B cell (primary cell): ENCODE measurements at regions of chr15 and their contacts with region 1.

Region 1: GRCh38 chr15:78241007-78241406 is 6.6 kb upstream of the ACSBG1 start:
- DNase-seq: peak; percentile 79
- ATAC-seq: peak; percentile 92
- H3K4me3 ChIP-seq: no peak overlapping the region
- H3K4me3 Mint-ChIP-seq: no peak overlapping the region
- H3K27ac ChIP-seq: no peak overlapping the region
- H3K27ac Mint-ChIP-seq: no peak overlapping the region
- H3K4me1 ChIP-seq: no peaks in the 10 kb centered on the region
- H3K4me1 Mint-ChIP-seq: no peaks in the 10 kb centered on the region
- H3K27me3 ChIP-seq: peaks cover 0 to 7% (median 0%) of the 10 kb centered on the region in 4 experiments
- H3K27me3 Mint-ChIP-seq: peaks cover 6% of the 10 kb centered on the region
- CTCF ChIP-seq: peak; percentile 87

Region 2: GRCh38 chr15:77909182-77909940 is 331.6 kb before region 1 on chr15:
- CTCF ChIA-PET with region 1: interaction called, 16 read pairs
- POLR2A ChIA-PET with region 1: no interaction called
- intact Hi-C with region 1: no loop called
- DNase-seq: peak; percentile 4
- ATAC-seq: no peak
- H3K4me3 ChIP-seq: no peak overlapping the region
- H3K4me3 Mint-ChIP-seq: no peak overlapping the region
- H3K27ac ChIP-seq: no peak overlapping the region
- H3K27ac Mint-ChIP-seq: no peak overlapping the region
- H3K4me1 ChIP-seq: no peaks in the 10 kb centered on the region
- H3K4me1 Mint-ChIP-seq: no peaks in the 10 kb centered on the region
- H3K27me3 ChIP-seq: no peaks in the 10 kb centered on the region
- H3K27me3 Mint-ChIP-seq: peaks cover 9% of the 10 kb centered on the region
- CTCF ChIP-seq: no peak

Region 3: GRCh38 chr15:77959432-77959879 is 281.6 kb before region 1 on chr15:
- CTCF ChIA-PET with region 1: interaction called, 43 read pairs
- POLR2A ChIA-PET with region 1: no interaction called
- intact Hi-C with region 1: loop called (anchors 1 kb)
- DNase-seq: peak; percentile 77
- ATAC-seq: peak; percentile 100
- H3K4me3 ChIP-seq: peak overlapping the region in 2 of 5 experiments; percentile 23 to 36
- H3K4me3 Mint-ChIP-seq: peak overlapping the region; percentile 49
- H3K27ac ChIP-seq: no peak overlapping the region
- H3K27ac Mint-ChIP-seq: no peak overlapping the region
- H3K4me1 ChIP-seq: peaks cover 3 to 6% of the 10 kb centered on the region in 2 donors
- H3K4me1 Mint-ChIP-seq: peaks cover 7% of the 10 kb centered on the region
- H3K27me3 ChIP-seq: peaks cover 0 to 2% (median 0%) of the 10 kb centered on the region in 4 experiments
- H3K27me3 Mint-ChIP-seq: peaks cover 18% of the 10 kb centered on the region
- CTCF ChIP-seq: peak; percentile 96

Region 4: GRCh38 chr15:77966540-77967290 is 274.3 kb before region 1 on chr15:
- CTCF ChIA-PET with region 1: interaction called, 18 read pairs
- POLR2A ChIA-PET with region 1: no interaction called
- intact Hi-C with region 1: no loop called
- DNase-seq: peak; percentile 62
- ATAC-seq: peak; percentile 68
- H3K4me3 ChIP-seq: no peak overlapping the region
- H3K4me3 Mint-ChIP-seq: no peak overlapping the region
- H3K27ac ChIP-seq: no peak overlapping the region
- H3K27ac Mint-ChIP-seq: no peak overlapping the region
- H3K4me1 ChIP-seq: no peaks in the 10 kb centered on the region
- H3K4me1 Mint-ChIP-seq: peaks cover 4% of the 10 kb centered on the region
- H3K27me3 ChIP-seq: no peaks in the 10 kb centered on the region
- H3K27me3 Mint-ChIP-seq: peaks cover 6% of the 10 kb centered on the region
- CTCF ChIP-seq: peak; percentile 84

Region 5: GRCh38 chr15:78131295-78132061 is 109.5 kb before region 1 on chr15 and contains the start of gene CIB2:
- CTCF ChIA-PET with region 1: interaction called, 30 read pairs
- POLR2A ChIA-PET with region 1: interaction called, 7 read pairs
- intact Hi-C with region 1: loop called (anchors 1 kb)
- DNase-seq: peak; percentile 86
- ATAC-seq: peak; percentile 94
- H3K4me3 ChIP-seq: peak within 1 kb of the TSS; percentile 43 to 77 (median 72)
- H3K4me3 Mint-ChIP-seq: peak within 1 kb of the TSS; percentile 89
- H3K27ac ChIP-seq: peak within 1 kb of the TSS; percentile 69 to 86
- H3K27ac Mint-ChIP-seq: peak within 1 kb of the TSS; percentile 88
- H3K4me1 ChIP-seq: peaks cover 12 to 14% of the 10 kb centered on the region in 2 donors
- H3K4me1 Mint-ChIP-seq: peaks cover 14% of the 10 kb centered on the region
- H3K27me3 ChIP-seq: no peaks in the 10 kb centered on the region
- H3K27me3 Mint-ChIP-seq: no peaks in the 10 kb centered on the region
- CTCF ChIP-seq: peak; percentile 83
- total RNA-seq, gene CIB2: 3.2 and 3.8 TPM in 2 replicates

Region 6: GRCh38 chr15:78540141-78540928 is 299.3 kb after region 1 on chr15 and contains the start of gene PSMA4:
- CTCF ChIA-PET with region 1: no interaction called
- POLR2A ChIA-PET with region 1: no interaction called
- intact Hi-C with region 1: no loop called
- DNase-seq: peak; percentile 97
- ATAC-seq: peak; percentile 87
- H3K4me3 ChIP-seq: peak within 1 kb of the TSS; percentile 89 to 99 (median 97)
- H3K4me3 Mint-ChIP-seq: peak within 1 kb of the TSS; percentile 98
- H3K27ac ChIP-seq: peak within 1 kb of the TSS; percentile 83 to 88
- H3K27ac Mint-ChIP-seq: peak within 1 kb of the TSS; percentile 100
- H3K4me1 ChIP-seq: peaks cover 12 to 23% of the 10 kb centered on the region in 2 donors
- H3K4me1 Mint-ChIP-seq: peaks cover 27% of the 10 kb centered on the region
- H3K27me3 ChIP-seq: no peaks in the 10 kb centered on the region
- H3K27me3 Mint-ChIP-seq: no peaks in the 10 kb centered on the region
- CTCF ChIP-seq: peak; percentile 38
- total RNA-seq, gene PSMA4: 94.9 and 95.9 TPM in 2 replicates